ENCODE measurements at regions of chr15 and their contacts with region 1.

Region 1: GRCh38 chr15:56428821-56429458 is 36.0 kb downstream of the MNS1 start:
- DNase-seq: no peak
- ATAC-seq: no peak
- H3K4me3 Mint-ChIP-seq: no peak overlapping the region
- H3K27ac Mint-ChIP-seq: no peak overlapping the region
- H3K4me1 Mint-ChIP-seq: peaks cover 5% of the 10 kb centered on the region
- H3K27me3 Mint-ChIP-seq: peaks cover 2% of the 10 kb centered on the region

Region 2: DNA sequence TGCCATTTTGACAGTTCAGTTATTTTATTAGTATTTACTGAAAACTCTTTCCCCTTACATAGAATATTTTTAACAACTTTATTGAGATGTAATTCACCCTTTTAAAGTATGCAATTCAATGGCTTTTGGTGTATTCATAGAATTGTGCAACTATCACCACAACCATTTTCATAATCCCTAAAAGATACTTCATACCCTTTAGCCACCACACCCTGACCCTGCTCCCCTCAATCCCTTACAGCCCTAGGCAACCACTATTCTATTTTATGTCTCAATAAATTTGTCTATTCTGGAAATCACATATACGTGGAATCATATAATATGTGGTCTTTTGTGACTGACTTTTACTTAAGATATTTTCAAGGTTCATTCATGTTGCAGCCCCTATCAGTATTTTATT is 34.0 kb before region 1 on chr15:
- POLR2A ChIA-PET with region 1: no interaction called
- DNase-seq: no peak
- ATAC-seq: no peak
- H3K4me3 Mint-ChIP-seq: no peak overlapping the region
- H3K27ac Mint-ChIP-seq: no peak overlapping the region
- H3K4me1 Mint-ChIP-seq: no peaks in the 10 kb centered on the region
- H3K27me3 Mint-ChIP-seq: no peaks in the 10 kb centered on the region

Region 3: DNA sequence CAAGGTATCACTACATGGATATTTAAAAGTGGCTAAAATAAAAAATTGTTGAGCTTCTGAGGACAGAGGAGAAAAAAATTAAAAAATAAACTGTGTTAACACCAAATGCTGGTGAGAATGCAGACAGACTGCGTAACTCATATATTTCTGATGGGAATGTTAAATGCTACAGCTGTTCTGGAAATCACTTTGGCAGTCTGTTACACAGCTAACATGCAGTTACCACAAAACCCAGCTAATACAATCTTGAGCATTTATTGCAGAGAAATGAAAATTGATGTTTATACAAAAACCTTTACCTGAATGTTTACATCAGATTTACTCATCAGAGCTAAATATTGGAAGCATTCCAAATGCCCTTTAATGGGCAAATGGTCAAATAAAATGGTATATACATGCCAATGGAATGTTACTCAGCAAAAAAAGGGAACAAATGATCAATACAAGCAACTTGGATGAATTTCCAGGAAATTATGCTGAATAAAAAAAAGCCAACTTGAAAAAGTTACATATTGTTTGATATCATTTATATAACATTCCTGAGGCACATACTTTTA is 11.4 kb after region 1 on chr15:
- POLR2A ChIA-PET with region 1: no interaction called
- DNase-seq: no peak
- ATAC-seq: no peak
- H3K4me3 Mint-ChIP-seq: no peak overlapping the region
- H3K27ac Mint-ChIP-seq: no peak overlapping the region
- H3K4me1 Mint-ChIP-seq: no peaks in the 10 kb centered on the region
- H3K27me3 Mint-ChIP-seq: peaks cover 9% of the 10 kb centered on the region

Region 4: GRCh38 chr15:57100136-57100539 is 671.2 kb after region 1 on chr15:
- POLR2A ChIA-PET with region 1: interaction called, 10 read pairs
- DNase-seq: no peak
- ATAC-seq: no peak
- H3K4me3 Mint-ChIP-seq: no peak overlapping the region
- H3K27ac Mint-ChIP-seq: no peak overlapping the region
- H3K4me1 Mint-ChIP-seq: peaks cover 1% of the 10 kb centered on the region
- H3K27me3 Mint-ChIP-seq: no peaks in the 10 kb centered on the region

Measured in activated naive CD8-positive, alpha-beta T cell treated with anti-CD3 and anti-CD28 coated beads, Interleukin-2, amount 10 ng/mL, durations not matched to agents 7 days and 5 days (primary cell).